ENCODE measurements at regions of chr17 and their contacts with region 1.

Region 1: GRCh38 chr17:29807520-29808351 is 122.3 kb downstream of the SSH2 start:
- DNase-seq: peak; percentile 82
- H3K4me3 ChIP-seq: peak overlapping the region in 2 of 8 donors; percentile 3 to 43
- H3K27ac ChIP-seq: peak overlapping the region in 5 of 8 donors; percentile 16 to 81 (median 54)
- H3K4me1 ChIP-seq: peaks cover 4 to 30% (median 21%) of the 10 kb centered on the region in 6 donors
- H3K27me3 ChIP-seq: no peaks in the 10 kb centered on the region
- CTCF ChIP-seq: peak; percentile 58 to 85 (median 77)
- POLR2A ChIP-seq: no peak

Region 2: DNA sequence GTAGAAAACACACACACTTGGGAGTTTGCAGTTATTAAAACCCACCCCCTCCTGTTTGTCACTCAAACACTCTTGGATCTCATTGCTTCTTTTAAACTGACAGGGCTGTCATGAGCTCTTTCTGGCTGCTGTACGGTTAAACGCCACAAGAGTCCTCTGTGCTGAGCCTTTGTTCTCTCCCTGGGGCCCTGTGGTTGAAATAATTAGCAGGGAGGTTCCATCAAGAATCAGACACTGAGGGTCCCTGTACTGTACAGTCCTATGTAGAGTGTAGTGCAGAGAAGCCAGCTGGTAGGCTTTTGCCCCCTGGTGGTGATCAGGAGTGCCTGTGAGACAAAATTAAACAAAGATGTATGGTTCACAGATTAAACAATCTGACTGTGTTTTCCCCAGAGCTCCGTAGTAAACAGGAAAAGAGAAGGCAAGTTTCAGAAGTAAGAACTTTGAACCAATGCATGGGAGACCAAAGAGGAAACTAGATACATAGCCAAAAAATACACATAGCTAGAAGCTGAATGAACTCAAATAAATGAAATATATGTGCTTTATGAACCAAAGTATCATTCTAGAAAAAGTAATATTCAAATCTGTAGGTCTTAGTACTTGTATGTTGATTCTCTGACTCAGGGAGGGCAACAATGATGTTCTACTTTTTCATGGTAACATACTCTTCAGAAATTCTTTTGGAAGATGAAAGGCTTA is 123.6 kb after region 1 on chr17:
- intact Hi-C with region 1: loop called (anchors 2 kb)
- DNase-seq: peak; percentile 83
- H3K4me3 ChIP-seq: peak overlapping the region in 7 of 8 donors; percentile 80 to 94 (median 87)
- H3K27ac ChIP-seq: peak overlapping the region in 6 of 8 donors; percentile 86 to 97 (median 94)
- H3K4me1 ChIP-seq: peaks cover 26 to 50% (median 45%) of the 10 kb centered on the region in 6 donors
- H3K27me3 ChIP-seq: no peaks in the 10 kb centered on the region
- CTCF ChIP-seq: peak; percentile 64 to 95 (median 87)
- POLR2A ChIP-seq: no peak

Region 3: GRCh38 chr17:30021708-30022317 is 214.1 kb after region 1 on chr17:
- intact Hi-C with region 1: loop called (anchors 10 kb)
- DNase-seq: no peak
- H3K4me3 ChIP-seq: no peak overlapping the region
- H3K27ac ChIP-seq: no peak overlapping the region
- H3K4me1 ChIP-seq: peaks cover 0 to 6% (median 0%) of the 10 kb centered on the region in 6 donors
- H3K27me3 ChIP-seq: no peaks in the 10 kb centered on the region
- CTCF ChIP-seq: peak; percentile 52 to 79 (median 68)
- POLR2A ChIP-seq: no peak